CD4-positive, alpha-beta memory T cell (primary cell): ENCODE measurements at regions of chr10 and their contacts with region 1.

Region 1: GRCh38 chr10:44959247-44960087 is at the start of gene RASSF4:
- DNase-seq: peak; percentile 87 to 90 (median 89)
- H3K4me3 ChIP-seq: peak within 1 kb of the TSS; percentile 66 to 77
- H3K4me3 Mint-ChIP-seq: peak within 1 kb of the TSS; percentile 88 to 91 (median 89)
- H3K27ac ChIP-seq: peak within 1 kb of the TSS; percentile 57
- H3K27ac Mint-ChIP-seq: peak within 1 kb of the TSS; percentile 63 to 92 (median 78)
- H3K4me1 ChIP-seq: peaks cover 26% of the 10 kb centered on the region
- H3K4me1 Mint-ChIP-seq: peaks cover 9 to 30% (median 23%) of the 10 kb centered on the region in 4 donors
- H3K27me3 ChIP-seq: no peaks in the 10 kb centered on the region
- H3K27me3 Mint-ChIP-seq: no peaks in the 10 kb centered on the region
- total RNA-seq, gene RASSF4: 1.6 to 1.8 TPM

Region 2: DNA sequence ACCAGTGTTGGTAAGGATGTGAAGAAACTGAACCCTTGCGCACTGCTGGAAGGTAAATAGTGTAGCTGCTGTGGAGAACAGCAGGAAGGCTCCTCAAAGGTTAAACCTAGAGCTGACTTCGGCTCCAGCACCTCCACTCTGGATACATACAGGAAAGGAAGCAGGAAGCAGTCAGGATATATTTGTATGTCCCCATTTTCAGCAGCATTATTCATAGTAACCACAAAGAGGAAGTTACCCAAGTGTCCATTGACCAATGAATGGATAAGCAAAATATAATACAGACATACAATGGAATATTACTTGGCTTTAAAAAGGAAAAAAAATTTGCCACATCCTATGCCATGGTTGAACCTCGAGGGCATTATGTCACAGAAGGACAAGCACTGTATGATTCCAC is 1867.6 kb before region 1 on chr10:
- CTCF ChIA-PET with region 1: no interaction called
- POLR2A ChIA-PET with region 1: no interaction called
- intact Hi-C with region 1: no loop called
- DNase-seq: no peak
- H3K4me3 ChIP-seq: no peak overlapping the region
- H3K4me3 Mint-ChIP-seq: no peak overlapping the region
- H3K27ac ChIP-seq: no peak overlapping the region
- H3K27ac Mint-ChIP-seq: no peak overlapping the region
- H3K4me1 ChIP-seq: no peaks in the 10 kb centered on the region
- H3K4me1 Mint-ChIP-seq: peaks cover 0 to 5% (median 2%) of the 10 kb centered on the region in 4 donors
- H3K27me3 ChIP-seq: no peaks in the 10 kb centered on the region
- H3K27me3 Mint-ChIP-seq: peaks cover 5 to 8% of the 10 kb centered on the region in 2 donors

Region 3: GRCh38 chr10:44878706-44879530 is 80.5 kb before region 1 on chr10:
- CTCF ChIA-PET with region 1: no interaction called
- POLR2A ChIA-PET with region 1: interaction called, 5 read pairs
- intact Hi-C with region 1: loop called (anchors 10 kb)
- DNase-seq: peak; percentile 63 to 75 (median 68)
- H3K4me3 ChIP-seq: peak overlapping the region; percentile 39 to 46
- H3K4me3 Mint-ChIP-seq: peak overlapping the region; percentile 86 to 94 (median 90)
- H3K27ac ChIP-seq: no peak overlapping the region
- H3K27ac Mint-ChIP-seq: peak overlapping the region in 5 of 7 donors; percentile 47 to 86 (median 72)
- H3K4me1 ChIP-seq: no peaks in the 10 kb centered on the region
- H3K4me1 Mint-ChIP-seq: peaks cover 7 to 17% (median 9%) of the 10 kb centered on the region in 4 donors
- H3K27me3 ChIP-seq: no peaks in the 10 kb centered on the region
- H3K27me3 Mint-ChIP-seq: peaks cover 2 to 7% of the 10 kb centered on the region in 2 donors

Region 4: GRCh38 chr10:44908066-44908749 is 51.3 kb before region 1 on chr10:
- CTCF ChIA-PET with region 1: no interaction called
- POLR2A ChIA-PET with region 1: no interaction called
- intact Hi-C with region 1: no loop called
- DNase-seq: no peak
- H3K4me3 ChIP-seq: no peak overlapping the region
- H3K4me3 Mint-ChIP-seq: no peak overlapping the region
- H3K27ac ChIP-seq: no peak overlapping the region
- H3K27ac Mint-ChIP-seq: no peak overlapping the region
- H3K4me1 ChIP-seq: peaks cover 2% of the 10 kb centered on the region
- H3K4me1 Mint-ChIP-seq: peaks cover 3 to 4% (median 3%) of the 10 kb centered on the region in 4 donors
- H3K27me3 ChIP-seq: no peaks in the 10 kb centered on the region
- H3K27me3 Mint-ChIP-seq: peaks cover 3% of the 10 kb centered on the region in 2 donors

Region 5: DNA sequence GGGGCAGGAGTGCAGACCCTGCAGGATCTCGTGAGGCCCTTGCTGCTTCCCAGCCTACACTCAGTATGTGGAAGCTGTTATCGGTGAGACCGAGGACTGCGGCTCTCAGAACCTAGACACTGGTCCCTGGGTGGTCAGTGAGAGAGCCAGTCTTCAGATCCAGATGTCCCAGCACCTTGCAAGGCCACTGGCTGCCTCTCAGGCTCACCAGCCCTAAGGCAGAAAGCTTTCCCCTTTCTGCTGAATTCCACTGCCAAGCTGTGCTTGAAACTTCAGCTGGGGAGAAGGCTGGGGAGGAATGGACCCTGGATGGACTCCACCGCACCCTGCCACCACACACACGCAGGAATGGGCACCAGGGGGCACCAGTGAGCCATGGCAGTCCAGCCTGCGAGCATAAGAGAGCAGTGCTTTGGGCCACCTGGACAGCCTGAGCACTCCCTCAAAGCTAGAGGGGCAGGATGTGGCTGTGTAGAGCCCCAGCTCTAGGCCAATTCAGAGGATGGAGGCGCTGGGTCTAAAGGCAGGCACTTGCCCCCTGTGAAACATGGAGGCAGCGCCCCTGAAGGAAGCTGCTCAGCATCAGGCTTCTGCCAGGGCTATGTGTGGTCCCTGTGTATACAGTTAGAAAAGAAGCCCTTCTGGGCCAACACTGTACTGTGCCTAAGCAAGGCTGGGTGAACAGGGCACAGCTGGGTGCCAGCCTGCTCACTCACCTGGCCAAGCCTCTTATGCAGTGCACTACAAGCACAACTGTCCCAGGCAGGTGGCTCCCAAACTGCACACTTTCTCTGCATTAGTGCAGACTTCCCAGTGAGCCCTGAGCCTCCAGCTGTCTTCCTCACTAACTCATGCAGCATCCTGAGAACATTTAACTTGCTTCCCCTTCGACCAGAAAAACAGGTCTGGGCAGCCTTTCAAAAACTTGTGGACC is 26.7 kb before region 1 on chr10:
- CTCF ChIA-PET with region 1: interaction called, 6 read pairs
- POLR2A ChIA-PET with region 1: no interaction called
- intact Hi-C with region 1: loop called (anchors 1 kb)
- DNase-seq: peak; percentile 64 to 70 (median 68)
- H3K4me3 ChIP-seq: no peak overlapping the region
- H3K4me3 Mint-ChIP-seq: no peak overlapping the region
- H3K27ac ChIP-seq: no peak overlapping the region
- H3K27ac Mint-ChIP-seq: no peak overlapping the region
- H3K4me1 ChIP-seq: no peaks in the 10 kb centered on the region
- H3K4me1 Mint-ChIP-seq: peaks cover 0 to 3% (median 1%) of the 10 kb centered on the region in 4 donors
- H3K27me3 ChIP-seq: no peaks in the 10 kb centered on the region
- H3K27me3 Mint-ChIP-seq: peaks cover 0 to 6% of the 10 kb centered on the region in 2 donors

Region 6: GRCh38 chr10:44974628-44975431 is 15.4 kb after region 1 on chr10:
- CTCF ChIA-PET with region 1: interaction called, 4 read pairs
- POLR2A ChIA-PET with region 1: no interaction called
- intact Hi-C with region 1: loop called (anchors 1 kb)
- DNase-seq: peak in 4 of 5 donors; percentile 60 to 75 (median 65)
- H3K4me3 ChIP-seq: peak overlapping the region; percentile 60 to 61
- H3K4me3 Mint-ChIP-seq: peak overlapping the region; percentile 61 to 80 (median 74)
- H3K27ac ChIP-seq: no peak overlapping the region
- H3K27ac Mint-ChIP-seq: peak overlapping the region in 4 of 7 donors; percentile 16 to 77 (median 33)
- H3K4me1 ChIP-seq: peaks cover 17% of the 10 kb centered on the region
- H3K4me1 Mint-ChIP-seq: peaks cover 0 to 9% (median 3%) of the 10 kb centered on the region in 4 donors
- H3K27me3 ChIP-seq: no peaks in the 10 kb centered on the region
- H3K27me3 Mint-ChIP-seq: no peaks in the 10 kb centered on the region

Region 7: DNA sequence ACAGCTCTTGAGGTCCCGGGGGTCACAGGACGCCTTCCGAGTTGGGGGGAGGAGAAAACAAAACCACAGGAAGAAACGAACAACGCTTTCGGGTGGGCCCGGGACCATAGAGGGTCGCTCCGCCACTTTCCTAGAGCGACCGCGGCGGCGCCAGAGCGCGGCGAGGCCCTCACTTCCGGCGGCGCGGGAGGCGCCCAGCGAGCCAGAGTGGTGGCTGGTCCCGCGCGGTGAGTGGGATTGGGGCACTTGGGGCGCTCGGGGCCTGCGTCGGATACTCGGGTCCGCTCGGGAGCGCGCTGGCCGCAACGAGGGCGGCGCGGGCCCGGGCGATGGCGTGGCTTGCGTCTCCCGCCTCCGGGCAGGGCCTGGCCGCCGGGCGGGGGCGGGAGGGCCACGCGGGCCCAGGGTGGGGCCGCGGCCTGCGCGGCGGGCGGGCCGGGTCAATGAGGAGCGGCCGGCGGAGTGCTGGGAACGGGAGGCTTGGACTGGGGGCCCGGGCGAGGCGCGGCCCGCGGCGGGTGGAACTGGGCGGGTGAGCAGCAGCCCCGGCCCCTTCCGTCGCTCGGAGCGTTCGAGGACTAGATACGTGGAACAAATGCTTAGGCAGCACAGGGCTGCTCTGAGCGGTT is 41.4 kb after region 1 on chr10 and contains the start of gene ZNF22:
- CTCF ChIA-PET with region 1: no interaction called
- POLR2A ChIA-PET with region 1: interaction called, 4 read pairs
- intact Hi-C with region 1: loop called (anchors 1 kb)
- DNase-seq: peak; percentile 59 to 68 (median 64)
- H3K4me3 ChIP-seq: peak within 1 kb of the TSS in 1 of 2 donors; percentile 61
- H3K4me3 Mint-ChIP-seq: peak within 1 kb of the TSS; percentile 89 to 96 (median 94)
- H3K27ac ChIP-seq: peak within 1 kb of the TSS; percentile 58
- H3K27ac Mint-ChIP-seq: peak within 1 kb of the TSS; percentile 75 to 95 (median 90)
- H3K4me1 ChIP-seq: peaks cover 21% of the 10 kb centered on the region
- H3K4me1 Mint-ChIP-seq: peaks cover 20 to 48% (median 34%) of the 10 kb centered on the region in 4 donors
- H3K27me3 ChIP-seq: no peaks in the 10 kb centered on the region
- H3K27me3 Mint-ChIP-seq: no peaks in the 10 kb centered on the region
- total RNA-seq, gene ZNF22: 26.9 to 27.1 TPM

Region 8: DNA sequence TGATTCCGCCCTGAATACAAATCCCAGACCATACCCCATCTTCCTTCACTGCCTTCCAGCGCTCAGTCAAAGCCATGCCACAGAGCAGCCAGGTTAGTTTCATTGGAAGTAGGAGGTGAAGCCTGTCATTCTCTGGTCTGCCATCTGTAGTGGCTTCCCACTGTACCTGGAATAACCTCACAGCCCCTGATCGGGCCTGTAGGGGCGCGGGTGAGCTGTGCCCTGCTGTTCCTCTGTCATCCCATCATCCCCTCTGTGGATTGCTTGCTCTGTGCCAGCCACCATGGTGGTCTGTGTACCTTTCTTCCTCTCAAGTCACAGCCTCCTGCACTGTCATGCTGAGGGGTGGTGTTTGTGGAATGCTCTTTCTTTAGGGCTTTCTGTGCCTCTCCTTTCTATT is 196.3 kb after region 1 on chr10:
- CTCF ChIA-PET with region 1: no interaction called
- POLR2A ChIA-PET with region 1: no interaction called
- intact Hi-C with region 1: no loop called
- DNase-seq: no peak
- H3K4me3 ChIP-seq: no peak overlapping the region
- H3K4me3 Mint-ChIP-seq: no peak overlapping the region
- H3K27ac ChIP-seq: no peak overlapping the region
- H3K27ac Mint-ChIP-seq: no peak overlapping the region
- H3K4me1 ChIP-seq: no peaks in the 10 kb centered on the region
- H3K4me1 Mint-ChIP-seq: no peaks in the 10 kb centered on the region
- H3K27me3 ChIP-seq: no peaks in the 10 kb centered on the region
- H3K27me3 Mint-ChIP-seq: peaks cover 3% of the 10 kb centered on the region in 2 donors